Heart right ventricle (tissue), 16 donors: ENCODE measurements at regions of chr9 and their contacts with region 1.

Region 1: DNA sequence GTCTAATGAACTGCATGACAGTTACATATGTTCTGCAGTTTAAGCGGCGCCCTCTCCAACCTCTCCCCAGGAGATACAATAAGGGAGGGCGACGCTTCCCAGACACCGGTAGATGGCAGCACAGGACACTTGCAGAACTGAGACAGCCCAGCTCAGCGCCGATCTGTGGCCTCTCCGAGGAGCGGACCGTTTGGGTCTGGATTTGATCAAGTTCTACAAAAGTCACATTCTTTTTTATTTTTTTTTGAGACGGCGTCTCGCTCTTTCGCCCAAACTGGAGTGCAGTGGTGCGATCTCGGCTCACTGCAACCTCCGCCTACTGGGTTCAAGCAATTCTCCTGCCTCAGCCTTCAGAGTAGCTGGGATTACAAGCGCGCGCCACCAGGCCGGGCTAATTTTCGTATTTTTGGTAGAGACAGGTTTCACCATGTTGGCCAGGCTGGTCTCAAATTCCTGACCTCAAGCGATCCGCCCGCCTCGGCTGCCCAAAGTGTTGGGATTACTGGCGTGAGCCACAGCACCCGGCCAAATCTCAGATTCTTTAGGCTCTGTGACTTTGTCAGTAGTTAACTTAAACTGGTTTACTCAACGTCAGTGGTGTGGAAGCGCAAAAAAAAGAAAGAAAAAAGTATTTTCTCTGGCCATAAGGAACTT is 1.4 kb upstream of the ATOSB start:
- DNase-seq: peak; percentile 83 to 95
- ATAC-seq: peak; percentile 71 to 87 (median 82)
- H3K4me3 ChIP-seq: peak overlapping the region; percentile 26 to 78 (median 66)
- H3K27ac ChIP-seq: peak overlapping the region in 9 of 10 donors; percentile 84 to 98 (median 94)
- H3K4me1 ChIP-seq: peaks cover 6 to 48% (median 39%) of the 10 kb centered on the region in 9 donors
- H3K27me3 ChIP-seq: no peaks in the 10 kb centered on the region
- CTCF ChIP-seq: peak; percentile 94 to 97 (median 95)

Region 2: GRCh38 chr9:35161713-35162604 is 44.9 kb after region 1 on chr9 and contains the start of gene UNC13B:
- intact Hi-C with region 1: loop called in 6 of 10 experiments (anchors 2 to 5 kb)
- DNase-seq: peak; percentile 96 to 97
- ATAC-seq: peak; percentile 98 to 100 (median 99)
- H3K4me3 ChIP-seq: peak within 1 kb of the TSS; percentile 61 to 93 (median 78)
- H3K27ac ChIP-seq: peak within 1 kb of the TSS; percentile 88 to 98 (median 94)
- H3K4me1 ChIP-seq: peaks cover 0 to 36% (median 21%) of the 10 kb centered on the region in 9 donors
- H3K27me3 ChIP-seq: peaks cover 0 to 6% (median 0%) of the 10 kb centered on the region in 7 donors
- CTCF ChIP-seq: peak in 5 of 9 donors; percentile 20 to 53 (median 39)
- total RNA-seq, gene UNC13B: 13.7 to 27.1 (median 19.9) TPM

Region 3: GRCh38 chr9:35385042-35385441 is 268.0 kb after region 1 on chr9:
- intact Hi-C with region 1: loop called in 6 of 10 experiments (anchors 2 to 10 kb)
- DNase-seq: no peak
- ATAC-seq: peak in 3 of 8 donors; percentile 41 to 61 (median 49)
- H3K4me3 ChIP-seq: no peak overlapping the region
- H3K27ac ChIP-seq: no peak overlapping the region
- H3K4me1 ChIP-seq: peaks cover 0 to 10% (median 0%) of the 10 kb centered on the region in 9 donors
- H3K27me3 ChIP-seq: no peaks in the 10 kb centered on the region
- CTCF ChIP-seq: peak in 6 of 9 donors; percentile 20 to 51 (median 34)

Region 4: GRCh38 chr9:35470894-35471293 is 353.9 kb after region 1 on chr9:
- intact Hi-C with region 1: loop called in 7 of 10 experiments (anchors 2 to 10 kb)
- DNase-seq: no peak
- ATAC-seq: no peak
- H3K4me3 ChIP-seq: no peak overlapping the region
- H3K27ac ChIP-seq: no peak overlapping the region
- H3K4me1 ChIP-seq: no peaks in the 10 kb centered on the region
- H3K27me3 ChIP-seq: no peaks in the 10 kb centered on the region
- CTCF ChIP-seq: no peak

Region 5: DNA sequence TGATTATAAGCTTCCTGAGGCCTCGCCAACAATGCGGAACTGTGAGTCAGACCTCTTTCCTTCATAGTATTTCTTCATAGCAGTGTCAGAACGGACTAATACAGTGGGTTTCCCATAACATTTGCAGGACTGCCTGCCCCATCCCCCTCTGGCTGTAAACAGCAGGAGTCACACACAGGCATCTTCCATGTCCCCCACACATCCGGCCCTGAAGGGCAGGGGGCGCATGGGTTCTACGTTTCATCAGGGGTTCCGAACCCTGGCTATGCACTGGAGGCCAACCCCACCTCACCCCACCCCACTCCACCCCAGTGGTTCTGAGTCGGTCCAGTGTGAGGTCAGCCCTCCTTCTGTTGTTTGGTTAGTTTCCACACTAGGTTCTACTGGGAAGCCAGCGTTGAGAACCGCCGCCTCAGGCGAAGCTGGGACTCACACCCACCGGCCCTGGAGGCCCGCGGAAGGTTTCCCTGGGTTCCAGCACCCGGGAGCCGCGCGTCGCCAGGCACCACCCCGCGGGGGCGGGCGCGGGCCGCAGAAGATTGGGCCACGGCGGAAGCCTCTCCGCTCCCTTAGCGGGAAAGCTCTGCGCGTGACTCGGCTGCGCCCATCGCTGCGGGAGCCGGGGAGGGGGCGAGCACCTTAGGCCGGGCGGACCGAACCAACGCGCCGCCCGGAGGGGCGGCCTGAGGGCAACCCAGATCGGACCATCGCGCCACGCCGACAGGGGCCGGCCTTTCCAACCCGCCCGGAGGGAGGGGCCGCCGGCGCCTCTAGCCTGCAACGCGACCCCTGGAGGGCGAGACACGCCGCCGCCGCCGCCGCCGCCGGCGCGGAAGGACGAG is 372.5 kb after region 1 on chr9 and contains the start of gene RUSC2:
- intact Hi-C with region 1: loop called in 2 of 10 experiments (anchors 5 to 10 kb)
- DNase-seq: peak; percentile 84 to 85
- ATAC-seq: peak; percentile 84 to 94 (median 86)
- H3K4me3 ChIP-seq: peak within 1 kb of the TSS; percentile 73 to 93 (median 80)
- H3K27ac ChIP-seq: peak within 1 kb of the TSS; percentile 87 to 97 (median 96)
- H3K4me1 ChIP-seq: peaks cover 0 to 45% (median 32%) of the 10 kb centered on the region in 9 donors
- H3K27me3 ChIP-seq: no peaks in the 10 kb centered on the region
- CTCF ChIP-seq: peak; percentile 3 to 64 (median 45)
- total RNA-seq, gene RUSC2: 22.1 to 34.9 (median 28.2) TPM

Region 6: GRCh38 chr9:35553670-35554543 is 436.9 kb after region 1 on chr9:
- intact Hi-C with region 1: loop called in 4 of 10 experiments (anchors 5 to 10 kb)
- DNase-seq: peak; percentile 40 to 78
- ATAC-seq: peak; percentile 80 to 91 (median 88)
- H3K4me3 ChIP-seq: no peak overlapping the region
- H3K27ac ChIP-seq: peak overlapping the region in 9 of 10 donors; percentile 11 to 71 (median 47)
- H3K4me1 ChIP-seq: peaks cover 4 to 42% (median 17%) of the 10 kb centered on the region in 9 donors
- H3K27me3 ChIP-seq: no peaks in the 10 kb centered on the region
- CTCF ChIP-seq: peak; percentile 84 to 96 (median 93)